ENCODE measurements at regions of chr5 and their contacts with region 1.

Region 1: DNA sequence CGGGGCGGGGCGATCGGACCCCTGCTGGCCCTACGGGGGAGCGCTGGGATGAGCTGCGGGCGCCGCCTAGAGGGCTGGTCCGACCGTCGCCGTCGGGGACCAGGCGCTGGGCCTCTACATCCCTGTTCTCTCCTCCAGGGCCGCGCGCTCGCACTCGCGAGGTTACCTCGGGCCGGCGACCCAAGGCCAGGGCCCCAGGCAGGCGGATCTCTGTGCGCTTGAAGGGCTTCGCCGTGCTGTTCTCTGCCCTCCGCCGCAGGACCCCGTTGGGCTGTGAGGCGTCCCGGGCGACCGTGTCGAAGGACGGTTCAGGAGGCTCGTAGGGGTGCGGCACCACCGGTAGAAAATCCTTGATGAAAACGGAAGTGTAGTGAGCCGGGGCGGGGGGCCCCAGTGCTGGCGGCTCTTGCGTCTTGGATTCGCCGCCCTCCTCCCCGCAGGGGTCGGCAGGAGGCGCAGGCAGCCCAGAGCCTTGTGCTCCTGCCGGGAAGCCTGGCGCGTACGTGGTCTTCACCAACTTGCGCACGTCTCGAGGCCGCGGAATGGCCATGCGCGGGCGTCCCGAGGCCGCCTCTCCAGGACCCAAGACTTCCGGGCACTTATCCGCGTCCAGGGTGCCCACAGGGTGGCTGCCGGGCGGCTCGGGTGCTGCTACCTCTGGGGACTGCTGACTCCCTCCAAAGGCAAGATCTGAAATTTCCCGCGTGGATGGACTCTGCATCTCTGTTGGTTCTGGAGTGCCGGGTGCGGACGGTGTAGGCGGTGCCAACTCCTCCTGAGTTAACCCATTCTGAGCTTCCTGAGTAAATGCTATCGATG is 2.0 kb downstream of the PROB1 start:
- DNase-seq: peak; percentile 61 to 83 (median 70)
- ATAC-seq: peak; percentile 74 to 75
- H3K4me3 Mint-ChIP-seq: peak overlapping the region; percentile 84 to 94 (median 90)
- H3K27ac Mint-ChIP-seq: peak overlapping the region in 9 of 10 donors; percentile 34 to 89 (median 60)
- H3K4me1 Mint-ChIP-seq: peaks cover 21 to 46% (median 43%) of the 10 kb centered on the region in 4 donors
- H3K27me3 Mint-ChIP-seq: peaks cover 0 to 1% (median 0%) of the 10 kb centered on the region in 5 donors

Region 2: DNA sequence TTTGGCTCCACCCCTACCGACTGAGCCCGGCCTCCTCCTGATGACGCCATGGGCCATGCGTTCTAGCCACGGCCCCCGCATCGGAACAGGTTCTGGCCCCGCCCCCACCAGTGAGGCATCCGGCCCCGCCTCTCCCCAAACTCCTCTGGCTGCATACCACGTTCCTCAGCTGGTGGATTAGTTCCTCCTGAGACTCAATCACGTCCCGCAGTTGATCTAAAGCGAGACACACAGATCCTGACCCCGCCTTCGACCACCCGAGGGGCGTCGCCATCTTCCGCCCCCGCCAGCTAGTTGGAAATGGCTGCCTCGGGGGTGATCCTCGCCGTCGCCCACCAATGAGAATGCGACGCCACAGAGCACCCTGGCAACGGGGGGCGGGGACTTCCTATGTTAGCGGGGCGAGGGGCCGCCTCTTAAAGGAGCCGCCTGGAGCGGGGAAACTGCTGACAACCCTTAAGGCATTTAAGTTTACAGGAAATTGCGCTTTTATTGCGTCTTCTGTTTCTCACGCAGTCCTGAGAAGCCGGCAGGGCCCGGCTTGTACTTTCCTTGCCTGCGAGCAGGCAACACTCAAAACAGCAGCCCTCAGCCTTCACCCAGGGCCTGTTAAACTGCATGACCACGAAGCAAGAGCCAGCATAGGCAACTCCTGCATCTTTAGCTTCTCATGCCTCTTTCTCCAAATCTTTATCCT is 11.0 kb after region 1 on chr5 and contains the start of gene SPATA24:
- POLR2A ChIA-PET with region 1: interaction called, 19 read pairs
- DNase-seq: peak; percentile 94 to 99 (median 98)
- ATAC-seq: peak; percentile 89 to 91
- H3K4me3 Mint-ChIP-seq: peak within 1 kb of the TSS; percentile 87 to 99 (median 96)
- H3K27ac Mint-ChIP-seq: peak within 1 kb of the TSS; percentile 95 to 100 (median 99)
- H3K4me1 Mint-ChIP-seq: peaks cover 24 to 45% (median 30%) of the 10 kb centered on the region in 4 donors
- H3K27me3 Mint-ChIP-seq: no peaks in the 10 kb centered on the region
- polyA plus RNA-seq, gene SPATA24: 2.9 to 8.7 (median 4.3) TPM